ENCODE measurements at regions of chr11 and their contacts with region 1.

Region 1: GRCh38 chr11:73257342-73258103 is 14.6 kb upstream of the P2RY6 start:
- DNase-seq: peak; percentile 93

Region 2: DNA sequence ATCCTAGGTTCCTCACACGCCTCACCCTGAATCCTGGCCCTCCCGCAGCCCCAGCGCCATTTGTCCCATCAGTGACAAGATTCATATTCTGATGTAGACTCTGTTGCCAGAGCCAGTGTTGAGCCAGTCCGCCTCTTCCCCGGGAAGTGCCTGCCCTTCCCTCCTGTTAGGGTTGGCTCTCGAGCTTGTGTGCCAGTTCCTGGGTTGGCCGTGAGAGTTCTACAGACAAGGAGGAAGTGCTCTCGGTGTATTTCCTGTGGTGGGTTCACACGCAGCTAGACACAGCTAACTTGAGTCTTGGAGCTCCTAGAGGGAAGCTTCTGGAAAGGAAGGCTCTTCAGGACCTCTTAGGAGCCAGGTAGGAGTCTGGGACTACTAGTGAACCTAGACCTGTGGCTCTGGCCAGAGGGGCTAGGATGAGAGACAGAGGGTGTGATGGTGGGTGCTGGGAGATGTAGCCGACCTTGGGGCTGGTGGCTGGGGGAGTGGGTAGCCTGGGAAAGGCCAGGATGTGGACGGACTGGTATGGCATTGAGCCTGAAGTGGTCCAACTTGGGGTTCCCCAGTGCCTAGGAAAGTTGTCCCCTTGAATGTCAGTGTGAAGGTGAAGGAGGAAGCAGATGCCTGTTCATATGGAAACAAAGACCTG is 1258.7 kb before region 1 on chr11 and contains the start of gene IL18BP:
- intact Hi-C with region 1: loop called in 1 of 2 experiments (anchors 5 kb)
- DNase-seq: no peak
- total RNA-seq, gene IL18BP: 11.3 to 13.0 TPM

Region 3: DNA sequence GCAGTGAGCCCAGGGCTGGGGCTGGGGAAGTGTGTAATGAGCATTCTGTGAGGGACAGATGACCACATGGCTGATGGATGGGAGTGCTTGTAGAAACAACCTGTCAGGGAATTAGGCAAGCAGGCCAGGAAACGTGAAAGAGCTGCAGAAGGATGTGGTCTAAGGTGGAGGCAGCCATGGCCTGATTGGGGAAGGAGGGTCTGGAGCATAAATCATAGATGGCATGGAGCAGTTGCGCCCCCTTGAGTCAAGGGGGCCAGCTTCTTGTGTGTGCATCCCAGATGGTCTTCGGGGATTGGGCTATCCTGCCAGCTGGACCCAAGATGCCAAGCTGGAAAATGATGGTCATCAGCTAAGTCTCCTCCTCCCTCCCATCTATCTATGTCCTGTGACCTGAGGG is 703.8 kb before region 1 on chr11:
- intact Hi-C with region 1: no loop called
- DNase-seq: no peak

Region 4: GRCh38 chr11:75063732-75064314 is 1806.3 kb after region 1 on chr11:
- intact Hi-C with region 1: no loop called
- DNase-seq: no peak